Heart left ventricle (tissue), 16 donors: ENCODE measurements at regions of chr20 and their contacts with region 1.

Region 1: GRCh38 chr20:8131598-8132483 is at the start of gene PLCB1:
- DNase-seq: peak; percentile 85 to 93 (median 89)
- ATAC-seq: peak; percentile 88 to 97 (median 95)
- H3K4me3 ChIP-seq: peak within 1 kb of the TSS; percentile 59 to 97 (median 78)
- H3K27ac ChIP-seq: peak within 1 kb of the TSS; percentile 53 to 91 (median 82)
- H3K4me1 ChIP-seq: peaks cover 0 to 30% (median 7%) of the 10 kb centered on the region in 12 donors
- H3K27me3 ChIP-seq: peaks cover 0 to 7% (median 0%) of the 10 kb centered on the region in 9 donors
- CTCF ChIP-seq: peak; percentile 73 to 99 (median 81)
- POLR2A ChIP-seq: peak in 1 of 2 donors; percentile 13
- total RNA-seq, gene PLCB1: 4.0 to 12.1 (median 8.0) TPM

Region 2: GRCh38 chr20:8049310-8049709 is 82.5 kb before region 1 on chr20:
- intact Hi-C with region 1: loop called in 5 of 10 experiments (anchors 5 to 10 kb)
- DNase-seq: no peak
- ATAC-seq: no peak
- H3K4me3 ChIP-seq: no peak overlapping the region
- H3K27ac ChIP-seq: no peak overlapping the region
- H3K4me1 ChIP-seq: no peaks in the 10 kb centered on the region
- H3K27me3 ChIP-seq: no peaks in the 10 kb centered on the region
- CTCF ChIP-seq: no peak
- POLR2A ChIP-seq: no peak

Region 3: DNA sequence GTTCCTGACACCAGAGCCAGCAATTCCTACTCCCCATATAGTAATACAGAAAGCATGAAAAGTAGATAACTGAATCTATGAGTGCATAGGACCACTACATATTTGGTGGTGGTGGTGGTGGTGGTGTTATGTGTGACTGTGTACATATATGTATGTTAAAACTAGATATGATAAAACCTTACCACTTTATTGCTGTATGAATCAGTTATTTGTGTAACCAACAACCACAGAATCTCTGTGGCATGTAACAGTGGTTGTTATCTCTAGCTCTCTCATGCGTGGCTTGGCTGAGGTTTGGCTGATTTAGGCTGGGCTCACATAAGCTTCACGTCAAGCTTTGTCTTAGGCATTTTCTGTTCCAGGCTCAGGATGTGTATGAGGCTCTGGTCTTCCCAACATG is 55.9 kb after region 1 on chr20:
- intact Hi-C with region 1: no loop called
- DNase-seq: no peak
- ATAC-seq: no peak
- H3K4me3 ChIP-seq: no peak overlapping the region
- H3K27ac ChIP-seq: no peak overlapping the region
- H3K4me1 ChIP-seq: peaks cover 0 to 8% (median 0%) of the 10 kb centered on the region in 12 donors
- H3K27me3 ChIP-seq: no peaks in the 10 kb centered on the region
- CTCF ChIP-seq: no peak
- POLR2A ChIP-seq: no peak

Region 4: DNA sequence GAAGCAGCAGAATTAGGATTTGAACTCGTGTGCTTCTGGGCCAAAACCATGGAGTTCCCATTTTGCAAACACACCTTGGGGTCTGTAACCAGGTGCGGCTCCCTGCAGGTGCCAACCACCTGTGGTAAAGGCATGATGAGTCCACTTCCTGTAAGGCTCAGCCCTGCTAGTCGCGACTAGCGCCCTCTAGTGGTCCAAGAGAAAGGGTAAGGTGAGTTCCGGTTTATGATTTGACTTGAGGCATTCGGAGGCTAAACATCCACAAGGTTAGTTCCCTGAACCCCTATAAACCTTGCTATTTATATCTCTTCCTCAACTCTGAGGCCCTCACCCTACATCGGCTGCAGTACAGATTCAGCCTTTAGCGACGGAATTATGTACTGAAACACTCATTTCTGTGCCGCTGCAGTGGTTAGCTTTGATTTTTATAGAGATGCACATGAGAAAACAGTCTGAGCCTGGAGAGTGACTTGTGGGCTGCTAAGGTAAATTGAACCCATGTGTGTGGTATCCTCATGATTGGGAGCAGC is 173.7 kb after region 1 on chr20:
- intact Hi-C with region 1: loop called in 7 of 10 experiments (anchors 2 to 10 kb)
- DNase-seq: peak in 4 of 5 donors; percentile 11 to 56 (median 39)
- ATAC-seq: peak in 1 of 4 donors; percentile 38
- H3K4me3 ChIP-seq: no peak overlapping the region
- H3K27ac ChIP-seq: no peak overlapping the region
- H3K4me1 ChIP-seq: peaks cover 0 to 14% (median 2%) of the 10 kb centered on the region in 12 donors
- H3K27me3 ChIP-seq: no peaks in the 10 kb centered on the region
- CTCF ChIP-seq: peak; percentile 25 to 58 (median 52)
- POLR2A ChIP-seq: no peak

Region 5: GRCh38 chr20:8535403-8536261 is 403.8 kb after region 1 on chr20:
- intact Hi-C with region 1: loop called in 2 of 10 experiments (anchors 2 to 5 kb)
- DNase-seq: no peak
- ATAC-seq: no peak
- H3K4me3 ChIP-seq: no peak overlapping the region
- H3K27ac ChIP-seq: no peak overlapping the region
- H3K4me1 ChIP-seq: peaks cover 0 to 11% (median 0%) of the 10 kb centered on the region in 12 donors
- H3K27me3 ChIP-seq: no peaks in the 10 kb centered on the region
- CTCF ChIP-seq: peak in 11 of 12 donors; percentile 10 to 46 (median 37)
- POLR2A ChIP-seq: no peak

Region 6: GRCh38 chr20:8664778-8665177 is 532.9 kb after region 1 on chr20:
- intact Hi-C with region 1: loop called in 4 of 10 experiments (anchors 5 to 10 kb)
- DNase-seq: peak in 1 of 5 donors; percentile 15
- ATAC-seq: peak in 3 of 4 donors; percentile 69 to 80 (median 80)
- H3K4me3 ChIP-seq: no peak overlapping the region
- H3K27ac ChIP-seq: peak overlapping the region in 1 of 12 donors; percentile 19
- H3K4me1 ChIP-seq: peaks cover 2 to 34% (median 21%) of the 10 kb centered on the region in 12 donors
- H3K27me3 ChIP-seq: no peaks in the 10 kb centered on the region
- CTCF ChIP-seq: peak in 11 of 12 donors; percentile 6 to 55 (median 29)
- POLR2A ChIP-seq: no peak